ENCODE measurements at regions of chr20 and their contacts with region 1.

Region 1: GRCh38 chr20:3924304-3925112 is 35.3 kb downstream of the PANK2 start:
- DNase-seq: no peak
- H3K4me3 ChIP-seq: no peak overlapping the region
- H3K27ac ChIP-seq: no peak overlapping the region
- H3K4me1 ChIP-seq: peaks cover 0 to 13% (median 7%) of the 10 kb centered on the region in 4 donors
- H3K27me3 ChIP-seq: no peaks in the 10 kb centered on the region
- CTCF ChIP-seq: no peak
- EP300 ChIP-seq: no peak
- POLR2A ChIP-seq: no peak

Region 2: DNA sequence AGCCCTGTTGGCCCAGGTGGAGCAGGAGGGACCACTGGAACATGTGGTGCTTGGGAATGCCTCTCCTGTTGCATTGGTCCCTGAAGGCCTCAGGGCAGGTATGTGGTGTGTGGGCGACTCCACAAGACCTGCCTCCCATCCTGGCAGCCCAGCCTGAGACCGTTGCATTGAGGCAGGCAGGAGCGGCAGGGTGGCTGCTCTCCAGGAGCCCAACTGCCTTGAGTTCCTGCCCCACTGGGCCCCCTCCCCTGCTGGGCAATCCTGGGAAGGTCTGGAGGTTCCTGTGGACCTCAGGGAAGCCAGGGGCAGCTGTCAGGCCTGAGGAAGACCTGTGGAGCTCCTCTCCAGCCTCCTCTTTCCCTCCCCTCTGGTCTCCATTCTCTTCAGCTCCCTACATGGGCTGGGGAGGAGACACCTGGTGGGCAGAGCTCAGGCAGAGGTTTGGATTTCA is 58.0 kb before region 1 on chr20:
- intact Hi-C with region 1: loop called (anchors 5 kb)
- DNase-seq: no peak
- H3K4me3 ChIP-seq: no peak overlapping the region
- H3K27ac ChIP-seq: no peak overlapping the region
- H3K4me1 ChIP-seq: peaks cover 0 to 3% (median 0%) of the 10 kb centered on the region in 4 donors
- H3K27me3 ChIP-seq: no peaks in the 10 kb centered on the region
- CTCF ChIP-seq: no peak
- EP300 ChIP-seq: no peak
- POLR2A ChIP-seq: no peak

Region 3: DNA sequence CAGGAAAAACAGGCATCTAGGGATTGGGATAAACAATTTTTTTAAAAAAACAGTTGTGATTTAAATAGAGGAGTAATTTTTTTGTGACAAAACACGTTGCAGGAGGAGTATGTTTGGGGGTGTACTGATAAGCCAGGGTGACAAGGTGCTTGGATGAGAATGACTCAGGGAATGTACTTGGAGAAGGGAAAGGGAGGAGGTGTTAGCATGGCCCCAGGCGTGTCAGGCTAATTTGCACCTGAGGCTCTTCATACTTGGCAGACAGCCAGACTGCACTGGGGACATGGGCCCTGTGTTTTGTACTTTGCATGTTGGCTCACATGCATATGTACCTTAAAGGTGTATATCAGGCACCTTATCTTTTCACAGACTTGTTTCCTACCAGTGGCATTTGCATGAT is 12.6 kb before region 1 on chr20:
- intact Hi-C with region 1: no loop called
- DNase-seq: no peak
- H3K4me3 ChIP-seq: no peak overlapping the region
- H3K27ac ChIP-seq: no peak overlapping the region
- H3K4me1 ChIP-seq: peaks cover 0 to 9% (median 6%) of the 10 kb centered on the region in 4 donors
- H3K27me3 ChIP-seq: no peaks in the 10 kb centered on the region
- CTCF ChIP-seq: no peak
- EP300 ChIP-seq: no peak
- POLR2A ChIP-seq: no peak